Heart right ventricle (tissue), 16 donors: ENCODE measurements at regions of chr11 and their contacts with region 1.

Region 1: DNA sequence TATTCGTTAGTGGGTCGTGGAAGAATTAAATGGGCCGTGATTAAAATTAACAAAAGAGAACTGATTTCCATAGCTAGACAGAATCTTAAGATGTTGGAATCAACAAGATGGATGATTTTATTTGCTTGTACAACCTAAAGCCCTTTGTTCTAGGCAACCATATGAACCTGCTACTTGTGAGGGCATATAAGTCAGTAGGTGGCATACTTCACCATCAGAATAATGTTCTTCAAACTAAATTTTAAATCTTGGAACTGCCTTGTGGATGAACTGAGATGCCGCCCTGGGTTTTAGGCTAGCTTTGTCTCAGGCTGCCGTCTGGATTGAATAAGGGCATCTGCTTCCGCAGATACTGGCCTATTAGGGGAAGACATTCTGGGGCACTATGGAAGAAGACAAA is 40.9 kb downstream of the CSRP3 start:
- DNase-seq: no peak
- ATAC-seq: no peak
- H3K4me3 ChIP-seq: no peak overlapping the region
- H3K27ac ChIP-seq: no peak overlapping the region
- H3K4me1 ChIP-seq: no peaks in the 10 kb centered on the region
- H3K27me3 ChIP-seq: no peaks in the 10 kb centered on the region
- CTCF ChIP-seq: peak in 4 of 9 donors; percentile 24 to 44 (median 36)

Region 2: DNA sequence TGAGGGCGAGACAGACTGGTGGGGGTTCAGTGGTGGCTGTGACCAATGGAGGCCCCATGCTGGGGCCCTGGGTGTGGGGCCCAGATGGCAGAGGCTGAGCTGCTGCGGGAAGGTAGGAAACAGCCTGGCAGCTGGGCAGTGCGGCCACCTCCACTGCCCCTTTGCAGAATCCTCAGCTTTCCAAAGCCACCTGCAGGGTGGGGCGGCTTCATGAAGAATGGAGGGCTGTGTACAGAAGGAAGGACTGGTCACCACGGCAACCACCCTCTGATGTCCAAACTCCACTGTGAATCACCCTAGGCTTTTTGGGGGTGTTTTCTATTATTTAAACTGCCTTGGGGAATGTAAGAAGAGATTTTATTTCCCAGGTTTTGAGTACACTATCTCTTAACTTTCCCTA is 385.5 kb after region 1 on chr11:
- intact Hi-C with region 1: loop called in 7 of 10 experiments (anchors 5 to 10 kb)
- DNase-seq: no peak
- ATAC-seq: no peak
- H3K4me3 ChIP-seq: no peak overlapping the region
- H3K27ac ChIP-seq: no peak overlapping the region
- H3K4me1 ChIP-seq: no peaks in the 10 kb centered on the region
- H3K27me3 ChIP-seq: peaks cover 0 to 3% (median 0%) of the 10 kb centered on the region in 7 donors
- CTCF ChIP-seq: no peak